ENCODE measurements at regions of chr4 and their contacts with region 1.

Region 1: GRCh38 chr4:109424093-109424841 is 9.3 kb upstream of the SEC24B start:
- DNase-seq: no peak
- ATAC-seq: no peak
- H3K4me3 ChIP-seq: no peak overlapping the region
- H3K27ac ChIP-seq: no peak overlapping the region
- H3K4me1 ChIP-seq: no peaks in the 10 kb centered on the region
- H3K27me3 ChIP-seq: no peaks in the 10 kb centered on the region
- CTCF ChIP-seq: no peak
- POLR2A ChIP-seq: no peak

Region 2: DNA sequence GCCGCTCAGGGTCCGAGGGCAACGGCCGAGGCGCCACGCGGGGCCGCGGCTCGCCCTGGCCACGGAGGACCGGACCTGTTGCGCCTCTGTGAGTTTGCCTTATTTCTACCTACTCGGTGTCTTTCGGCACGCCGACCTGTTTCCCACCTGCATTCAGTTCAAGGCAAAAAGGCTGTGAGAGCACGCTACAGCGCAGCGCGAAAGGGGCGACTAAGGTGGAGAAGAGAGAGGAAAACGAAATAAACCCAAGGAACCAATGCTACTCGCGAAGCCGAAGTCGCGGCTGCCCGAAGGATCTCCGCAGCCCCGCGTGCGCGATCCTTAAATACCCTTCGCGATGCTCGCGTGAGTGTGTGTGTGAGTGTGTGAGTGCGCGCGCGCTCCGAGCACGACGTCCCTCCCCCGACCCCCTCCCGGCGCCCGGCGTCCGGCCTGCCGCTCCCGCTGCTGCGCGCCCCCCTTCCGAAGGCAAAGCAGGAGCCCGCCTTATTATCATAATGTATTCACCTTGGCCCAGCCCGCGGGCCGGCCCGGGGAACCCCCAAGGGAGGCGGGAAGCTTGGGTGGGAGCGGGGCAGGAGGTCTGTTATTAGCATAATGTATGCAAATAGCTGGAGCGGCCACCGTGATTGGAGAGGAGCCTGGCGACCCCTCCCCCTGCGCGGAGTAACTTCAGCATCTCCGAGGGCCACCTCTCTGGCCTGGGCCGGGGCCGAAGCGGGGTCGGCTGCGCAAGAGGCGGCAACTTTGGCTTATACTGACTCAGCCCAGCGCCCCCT is 121.7 kb before region 1 on chr4 and contains the start of gene COL25A1:
- intact Hi-C with region 1: no loop called
- DNase-seq: peak; percentile 45 to 53 (median 51)
- ATAC-seq: peak; percentile 38 to 79 (median 64)
- H3K4me3 ChIP-seq: peak within 1 kb of the TSS; percentile 38 to 51 (median 47)
- H3K27ac ChIP-seq: no peak within 1 kb of the TSS
- H3K4me1 ChIP-seq: peaks cover 0 to 15% (median 0%) of the 10 kb centered on the region in 4 donors
- H3K27me3 ChIP-seq: peaks cover 0 to 8% of the 10 kb centered on the region in 2 donors
- CTCF ChIP-seq: no peak
- POLR2A ChIP-seq: no peak
- total RNA-seq, gene COL25A1: 0.06 to 4.8 (median 1.3) TPM

Region 3: DNA sequence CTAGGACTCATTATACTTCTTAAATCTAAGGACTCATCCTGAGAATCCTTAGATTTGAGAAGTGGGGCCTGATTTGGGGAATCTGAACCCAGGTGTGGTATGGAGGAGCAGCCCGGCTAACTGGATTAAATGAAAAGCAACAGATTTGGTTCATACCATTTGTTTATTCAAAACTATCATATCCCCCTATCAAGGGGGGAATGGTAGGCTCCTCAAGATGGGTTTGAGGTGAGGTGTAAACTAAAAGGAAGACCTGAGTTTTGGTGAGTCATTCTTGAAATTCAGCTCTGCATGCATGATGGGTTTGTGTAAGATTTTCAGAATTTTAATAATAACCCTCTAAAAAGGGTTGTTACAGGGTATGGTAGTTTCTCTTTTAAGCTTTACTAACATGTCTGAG is 225.6 kb after region 1 on chr4:
- intact Hi-C with region 1: loop called (anchors 5 to 10 kb)
- DNase-seq: no peak
- ATAC-seq: no peak
- H3K4me3 ChIP-seq: no peak overlapping the region
- H3K27ac ChIP-seq: no peak overlapping the region
- H3K4me1 ChIP-seq: no peaks in the 10 kb centered on the region
- H3K27me3 ChIP-seq: no peaks in the 10 kb centered on the region
- CTCF ChIP-seq: no peak
- POLR2A ChIP-seq: no peak

Region 4: DNA sequence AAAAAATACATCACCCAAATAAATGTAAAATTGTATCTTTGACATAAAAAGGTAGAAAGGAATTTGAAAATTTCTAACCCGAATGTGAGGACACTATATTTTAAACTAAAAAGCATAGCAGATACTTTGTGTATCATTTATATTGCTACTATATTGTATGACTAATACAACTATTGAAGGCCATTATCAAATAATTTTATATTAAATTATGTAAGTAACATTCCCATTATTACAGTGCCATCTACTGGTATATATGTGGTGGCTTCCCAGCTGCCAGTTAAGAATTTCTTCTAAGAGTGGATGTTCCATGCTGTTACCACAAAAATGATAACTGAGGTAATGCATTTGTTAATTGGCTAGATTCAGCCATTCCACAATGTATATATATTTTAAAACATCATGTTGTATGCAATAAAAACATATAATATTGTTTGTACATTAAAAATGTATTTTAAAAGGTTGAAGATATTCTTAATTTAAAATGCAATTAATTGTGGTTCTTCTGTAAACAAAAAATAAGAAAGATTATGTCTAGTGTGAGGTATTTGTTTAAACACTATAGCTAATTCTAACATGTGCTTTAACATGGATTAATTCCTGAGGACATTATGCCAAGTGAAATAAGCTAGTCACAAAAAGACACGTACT is 553.7 kb after region 1 on chr4:
- intact Hi-C with region 1: loop called in 1 of 2 experiments (anchors 10 kb)
- DNase-seq: no peak
- ATAC-seq: peak; percentile 65 to 72 (median 72)
- H3K4me3 ChIP-seq: no peak overlapping the region
- H3K27ac ChIP-seq: no peak overlapping the region
- H3K4me1 ChIP-seq: no peaks in the 10 kb centered on the region
- H3K27me3 ChIP-seq: no peaks in the 10 kb centered on the region
- CTCF ChIP-seq: peak; percentile 52 to 87 (median 82)
- POLR2A ChIP-seq: no peak

Measured in right lobe of liver (tissue), 6 donors.